ENCODE measurements at regions of chr12 and their contacts with region 1.

Region 1: DNA sequence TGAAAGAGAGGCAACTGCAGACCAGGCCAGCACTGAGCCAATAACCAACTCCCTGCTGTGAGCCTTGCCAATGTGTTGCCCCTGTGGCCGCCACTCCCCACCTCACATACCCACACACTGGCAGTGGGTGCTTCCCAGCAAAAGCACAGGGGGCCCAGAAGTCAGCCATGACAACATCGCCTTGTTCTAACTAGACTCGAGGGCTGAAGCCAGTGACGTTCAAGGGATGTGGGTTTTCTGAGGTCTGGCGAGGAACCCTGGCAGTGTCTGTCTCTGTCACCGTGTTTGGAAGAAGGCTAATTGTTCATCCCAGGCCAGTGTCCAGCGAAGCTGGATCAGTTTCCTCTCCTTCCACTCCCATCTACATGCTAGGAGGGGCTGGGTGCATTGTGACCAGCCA is 311.8 kb upstream of the AMIGO2 start:
- DNase-seq: peak; percentile 88
- H3K4me3 Mint-ChIP-seq: peak overlapping the region; percentile 77
- H3K27ac Mint-ChIP-seq: peak overlapping the region; percentile 100
- H3K4me1 Mint-ChIP-seq: peaks cover 90% of the 10 kb centered on the region
- H3K27me3 Mint-ChIP-seq: no peaks in the 10 kb centered on the region

Region 2: DNA sequence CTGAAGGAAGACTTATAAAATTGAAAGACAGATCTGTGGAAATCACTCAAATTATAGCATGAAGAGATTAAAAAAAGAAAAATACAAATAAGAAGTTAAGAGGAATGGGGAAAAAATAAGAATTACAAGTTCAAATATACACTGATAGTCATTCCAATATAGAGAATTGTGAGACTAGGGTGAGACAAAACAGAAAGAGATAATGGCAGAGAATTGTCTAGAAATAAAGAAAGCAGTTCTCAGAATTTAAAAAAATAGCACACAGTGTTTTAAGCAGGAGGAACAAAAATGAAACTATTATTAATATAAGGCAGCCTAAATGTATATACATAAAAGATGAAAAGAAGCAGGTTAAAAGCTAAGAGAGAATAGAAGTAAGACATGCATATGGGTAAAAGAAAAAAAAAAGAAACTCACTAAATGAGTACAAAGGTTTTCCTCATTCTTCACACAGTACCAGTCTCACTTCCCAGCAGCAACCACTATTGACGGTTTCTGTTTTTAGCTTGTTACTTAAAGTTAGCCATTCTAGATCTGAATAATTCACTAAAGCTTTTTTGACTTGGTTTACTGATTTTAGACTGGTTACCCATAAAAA is 596.9 kb before region 1 on chr12:
- CTCF ChIA-PET with region 1: no interaction called
- intact Hi-C with region 1: loop called (anchors 1 kb)
- DNase-seq: peak; percentile 46
- H3K4me3 Mint-ChIP-seq: no peak overlapping the region
- H3K27ac Mint-ChIP-seq: peak overlapping the region; percentile 80
- H3K4me1 Mint-ChIP-seq: peaks cover 27% of the 10 kb centered on the region
- H3K27me3 Mint-ChIP-seq: no peaks in the 10 kb centered on the region

Region 3: GRCh38 chr12:47216150-47216677 is 175.4 kb before region 1 on chr12:
- CTCF ChIA-PET with region 1: interaction called, 20 read pairs
- intact Hi-C with region 1: loop called (anchors 1 kb)
- DNase-seq: peak; percentile 83
- H3K4me3 Mint-ChIP-seq: peak overlapping the region; percentile 94
- H3K27ac Mint-ChIP-seq: peak overlapping the region; percentile 100
- H3K4me1 Mint-ChIP-seq: peaks cover 12% of the 10 kb centered on the region
- H3K27me3 Mint-ChIP-seq: no peaks in the 10 kb centered on the region

Region 4: GRCh38 chr12:47350062-47350408 is 41.5 kb before region 1 on chr12:
- CTCF ChIA-PET with region 1: interaction called, 40 read pairs
- intact Hi-C with region 1: loop called (anchors 1 kb)
- DNase-seq: no peak
- H3K4me3 Mint-ChIP-seq: peak overlapping the region; percentile 67
- H3K27ac Mint-ChIP-seq: peak overlapping the region; percentile 94
- H3K4me1 Mint-ChIP-seq: peaks cover 85% of the 10 kb centered on the region
- H3K27me3 Mint-ChIP-seq: no peaks in the 10 kb centered on the region

Region 5: GRCh38 chr12:47758834-47759690 is 367.5 kb after region 1 on chr12 and contains the start of gene RAPGEF3:
- CTCF ChIA-PET with region 1: no interaction called
- intact Hi-C with region 1: loop called (anchors 5 kb)
- DNase-seq: peak; percentile 86
- H3K4me3 Mint-ChIP-seq: peak within 1 kb of the TSS; percentile 65
- H3K27ac Mint-ChIP-seq: no peak within 1 kb of the TSS
- H3K4me1 Mint-ChIP-seq: peaks cover 24% of the 10 kb centered on the region
- H3K27me3 Mint-ChIP-seq: no peaks in the 10 kb centered on the region
- total RNA-seq, gene RAPGEF3: 1.5 to 1.6 TPM

Measured in activated naive CD4-positive, alpha-beta T cell treated with anti-CD3 and anti-CD28 coated beads for 36 hours (primary cell).